MCF 10A (cell line): ENCODE measurements at regions of chr2 and their contacts with region 1.

Region 1: GRCh38 chr2:3728104-3729054 is 25.0 kb downstream of the DCDC2C start:
- DNase-seq: peak; percentile 62
- H3K4me3 Mint-ChIP-seq: no peak overlapping the region
- H3K27ac Mint-ChIP-seq: no peak overlapping the region
- H3K4me1 Mint-ChIP-seq: peaks cover 12% of the 10 kb centered on the region
- H3K27me3 Mint-ChIP-seq: peaks cover 43% of the 10 kb centered on the region
- CTCF ChIP-seq: peak; percentile 51

Region 2: GRCh38 chr2:3692381-3692780 is 36.0 kb before region 1 on chr2:
- CTCF ChIA-PET with region 1: interaction called, 50 read pairs
- POLR2A ChIA-PET with region 1: no interaction called
- intact Hi-C with region 1: no loop called
- DNase-seq: peak; percentile 48
- H3K4me3 Mint-ChIP-seq: no peak overlapping the region
- H3K27ac Mint-ChIP-seq: no peak overlapping the region
- H3K4me1 Mint-ChIP-seq: no peaks in the 10 kb centered on the region
- H3K27me3 Mint-ChIP-seq: peaks cover 22% of the 10 kb centered on the region
- CTCF ChIP-seq: peak; percentile 72

Region 3: GRCh38 chr2:3738454-3738853 is 10.1 kb after region 1 on chr2:
- CTCF ChIA-PET with region 1: interaction called, 13 read pairs
- POLR2A ChIA-PET with region 1: no interaction called
- intact Hi-C with region 1: no loop called
- DNase-seq: peak; percentile 74
- H3K4me3 Mint-ChIP-seq: no peak overlapping the region
- H3K27ac Mint-ChIP-seq: no peak overlapping the region
- H3K4me1 Mint-ChIP-seq: no peaks in the 10 kb centered on the region
- H3K27me3 Mint-ChIP-seq: peaks cover 16% of the 10 kb centered on the region
- CTCF ChIP-seq: peak; percentile 60

Region 4: DNA sequence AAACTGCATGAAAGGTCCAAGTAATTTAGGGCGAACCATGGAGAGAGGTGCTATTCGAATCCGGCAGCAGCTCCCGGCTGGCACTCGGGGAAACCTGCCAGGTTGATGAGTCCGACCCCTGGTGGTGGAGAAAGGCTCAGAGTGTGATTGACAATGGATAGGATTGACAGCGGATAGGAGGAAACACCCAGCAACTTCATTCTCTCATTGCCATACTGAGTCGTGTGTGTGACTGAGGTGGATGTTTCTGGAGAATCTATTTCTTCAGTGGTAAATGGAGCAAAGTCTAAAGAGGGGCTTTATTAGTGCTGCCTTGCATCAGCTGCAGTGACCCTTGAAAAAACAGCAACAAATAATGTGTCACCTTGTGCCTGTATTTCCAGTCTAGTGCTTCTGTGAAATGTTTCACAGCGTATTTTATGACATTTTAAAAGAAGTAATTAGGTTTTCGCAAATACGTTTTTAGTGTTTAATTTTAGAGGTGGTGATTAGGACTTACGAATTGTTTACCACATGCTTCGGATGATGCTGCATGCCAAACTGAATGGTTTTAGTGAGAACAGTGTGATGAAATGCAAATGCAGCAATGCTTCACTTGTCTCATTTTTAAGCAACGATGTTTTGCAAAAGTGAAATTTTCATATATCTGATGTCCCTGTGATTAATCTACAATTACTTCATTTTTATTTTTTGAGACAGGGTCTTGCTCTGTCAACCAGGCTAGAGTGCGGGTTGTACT is 77.0 kb after region 1 on chr2:
- CTCF ChIA-PET with region 1: interaction called, 10 read pairs
- POLR2A ChIA-PET with region 1: no interaction called
- intact Hi-C with region 1: no loop called
- DNase-seq: peak; percentile 73
- H3K4me3 Mint-ChIP-seq: no peak overlapping the region
- H3K27ac Mint-ChIP-seq: no peak overlapping the region
- H3K4me1 Mint-ChIP-seq: peaks cover 15% of the 10 kb centered on the region
- H3K27me3 Mint-ChIP-seq: no peaks in the 10 kb centered on the region
- CTCF ChIP-seq: peak; percentile 20

Region 5: DNA sequence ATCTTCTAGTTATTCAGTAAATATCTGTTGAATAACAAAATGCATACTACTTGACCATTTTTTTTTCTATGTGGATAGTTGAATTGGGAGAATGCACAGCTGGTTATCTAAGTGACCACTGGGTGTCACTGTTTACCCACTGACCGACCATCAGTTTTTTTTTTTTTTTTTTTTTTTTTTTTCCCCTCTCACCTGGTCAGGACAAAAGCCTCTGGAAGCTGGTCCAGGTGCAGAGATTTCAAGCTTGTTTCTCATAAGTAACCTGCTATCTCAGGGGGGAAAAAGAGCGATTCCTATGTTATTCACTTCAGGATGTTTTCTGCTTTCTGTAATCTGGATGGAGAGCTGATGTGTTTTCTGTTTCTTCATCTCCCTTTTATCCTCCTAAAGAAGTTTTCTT is 231.0 kb after region 1 on chr2:
- CTCF ChIA-PET with region 1: interaction called, 15 read pairs
- POLR2A ChIA-PET with region 1: no interaction called
- intact Hi-C with region 1: no loop called
- DNase-seq: peak; percentile 46
- H3K4me3 Mint-ChIP-seq: no peak overlapping the region
- H3K27ac Mint-ChIP-seq: no peak overlapping the region
- H3K4me1 Mint-ChIP-seq: peaks cover 10% of the 10 kb centered on the region
- H3K27me3 Mint-ChIP-seq: no peaks in the 10 kb centered on the region
- CTCF ChIP-seq: peak; percentile 55

Region 6: GRCh38 chr2:4762951-4763376 is 1034.6 kb after region 1 on chr2:
- CTCF ChIA-PET with region 1: interaction called, 4 read pairs
- POLR2A ChIA-PET with region 1: no interaction called
- intact Hi-C with region 1: loop called (anchors 1 kb)
- DNase-seq: peak; percentile 50
- H3K4me3 Mint-ChIP-seq: no peak overlapping the region
- H3K27ac Mint-ChIP-seq: peak overlapping the region; percentile 63
- H3K4me1 Mint-ChIP-seq: peaks cover 8% of the 10 kb centered on the region
- H3K27me3 Mint-ChIP-seq: no peaks in the 10 kb centered on the region
- CTCF ChIP-seq: peak; percentile 64